ENCODE measurements at regions of chr12 and their contacts with region 1.

Region 1: DNA sequence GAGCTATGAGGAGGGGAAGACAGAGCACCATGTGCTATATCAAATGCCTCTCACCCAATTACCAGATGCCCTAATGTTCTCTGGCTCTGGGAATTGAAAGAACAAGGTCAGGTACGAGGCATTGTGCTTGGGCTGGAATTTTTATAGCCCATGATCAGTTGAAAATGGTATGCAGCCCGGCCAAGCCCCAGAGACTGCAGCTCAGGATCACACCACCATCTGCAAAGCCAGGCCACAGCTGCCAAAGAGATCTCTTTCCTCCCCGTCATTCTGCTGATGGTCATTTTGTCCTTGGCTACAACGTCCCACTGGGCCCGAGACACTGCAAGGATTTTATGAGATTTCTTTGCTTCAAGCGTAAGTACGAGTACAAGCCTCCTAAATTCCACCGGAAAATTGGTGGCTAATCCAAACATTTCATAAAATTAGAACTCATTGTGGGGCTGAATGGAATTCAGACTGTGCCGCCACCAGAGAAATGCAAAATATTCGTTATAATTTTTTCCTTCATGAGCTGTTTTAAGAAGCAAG is 15.1 kb downstream of the NUAK1 start:
- DNase-seq: peak in 1 of 2 donors; percentile 89
- H3K4me3 ChIP-seq: peak overlapping the region; percentile 8 to 49
- H3K27ac ChIP-seq: peak overlapping the region; percentile 75 to 93
- H3K4me1 ChIP-seq: peaks cover 10 to 88% of the 10 kb centered on the region in 2 donors
- H3K27me3 ChIP-seq: no peaks in the 10 kb centered on the region
- CTCF ChIP-seq: no peak

Region 2: GRCh38 chr12:106106884-106107283 is 16.7 kb before region 1 on chr12:
- intact Hi-C with region 1: loop called (anchors 2 kb)
- DNase-seq: no peak
- H3K4me3 ChIP-seq: no peak overlapping the region
- H3K27ac ChIP-seq: peak overlapping the region; percentile 91
- H3K4me1 ChIP-seq: peaks cover 16 to 71% of the 10 kb centered on the region in 2 donors
- H3K27me3 ChIP-seq: no peaks in the 10 kb centered on the region
- CTCF ChIP-seq: no peak

Region 3: GRCh38 chr12:106282457-106283097 is 159.0 kb after region 1 on chr12:
- intact Hi-C with region 1: no loop called
- DNase-seq: no peak
- H3K4me3 ChIP-seq: no peak overlapping the region
- H3K27ac ChIP-seq: no peak overlapping the region
- H3K4me1 ChIP-seq: no peaks in the 10 kb centered on the region
- H3K27me3 ChIP-seq: no peaks in the 10 kb centered on the region
- CTCF ChIP-seq: peak; percentile 53 to 67 (median 54)